Gastrocnemius medialis (tissue), 4 donors: ENCODE measurements at regions of chr11 and their contacts with region 1.

Region 1: DNA sequence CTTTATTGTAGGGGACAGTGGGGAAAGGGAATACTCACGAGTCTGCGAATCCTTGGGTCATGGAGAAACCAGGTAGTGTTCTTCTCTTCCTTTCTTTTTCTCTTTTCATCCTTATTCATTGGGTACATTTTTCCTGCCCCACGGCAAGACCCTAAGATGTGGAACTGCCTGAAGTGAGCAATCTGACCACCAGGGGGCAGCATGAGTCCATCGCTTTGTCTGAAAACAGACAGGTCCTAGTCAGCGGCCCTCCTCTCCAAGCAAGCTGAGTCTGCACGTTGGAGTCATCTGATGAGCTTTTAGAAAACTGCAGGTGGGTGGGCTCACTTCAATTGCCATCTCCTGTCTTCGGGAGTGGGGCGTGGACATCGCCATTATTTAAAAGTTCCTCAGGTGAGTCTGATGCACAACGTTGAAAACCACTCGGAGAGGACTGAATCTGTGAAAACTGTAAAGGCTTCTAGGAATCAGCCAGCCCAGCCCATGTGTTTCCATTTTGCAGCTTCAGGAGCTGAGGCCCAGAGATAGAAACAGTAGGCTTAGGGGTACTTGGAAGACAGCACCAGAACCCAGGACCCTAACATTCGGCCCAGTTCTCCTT is 34.0 kb upstream of the FBXO3 start:
- DNase-seq: peak; percentile 53 to 68
- ATAC-seq: peak; percentile 92 to 93
- H3K4me3 ChIP-seq: no peak overlapping the region
- H3K27ac ChIP-seq: no peak overlapping the region
- H3K4me1 ChIP-seq: no peaks in the 10 kb centered on the region
- H3K27me3 ChIP-seq: peaks cover 0 to under 1% (median 0%) of the 10 kb centered on the region in 3 donors
- CTCF ChIP-seq: peak; percentile 70 to 92 (median 87)
- POLR2A ChIP-seq: no peak

Region 2: GRCh38 chr11:33445761-33446161 is 362.6 kb before region 1 on chr11:
- in situ Hi-C with region 1: no loop called
- intact Hi-C with region 1: no loop called
- DNase-seq: no peak
- ATAC-seq: no peak
- H3K4me3 ChIP-seq: no peak overlapping the region
- H3K27ac ChIP-seq: no peak overlapping the region
- H3K4me1 ChIP-seq: no peaks in the 10 kb centered on the region
- H3K27me3 ChIP-seq: no peaks in the 10 kb centered on the region
- CTCF ChIP-seq: no peak
- POLR2A ChIP-seq: no peak

Region 3: DNA sequence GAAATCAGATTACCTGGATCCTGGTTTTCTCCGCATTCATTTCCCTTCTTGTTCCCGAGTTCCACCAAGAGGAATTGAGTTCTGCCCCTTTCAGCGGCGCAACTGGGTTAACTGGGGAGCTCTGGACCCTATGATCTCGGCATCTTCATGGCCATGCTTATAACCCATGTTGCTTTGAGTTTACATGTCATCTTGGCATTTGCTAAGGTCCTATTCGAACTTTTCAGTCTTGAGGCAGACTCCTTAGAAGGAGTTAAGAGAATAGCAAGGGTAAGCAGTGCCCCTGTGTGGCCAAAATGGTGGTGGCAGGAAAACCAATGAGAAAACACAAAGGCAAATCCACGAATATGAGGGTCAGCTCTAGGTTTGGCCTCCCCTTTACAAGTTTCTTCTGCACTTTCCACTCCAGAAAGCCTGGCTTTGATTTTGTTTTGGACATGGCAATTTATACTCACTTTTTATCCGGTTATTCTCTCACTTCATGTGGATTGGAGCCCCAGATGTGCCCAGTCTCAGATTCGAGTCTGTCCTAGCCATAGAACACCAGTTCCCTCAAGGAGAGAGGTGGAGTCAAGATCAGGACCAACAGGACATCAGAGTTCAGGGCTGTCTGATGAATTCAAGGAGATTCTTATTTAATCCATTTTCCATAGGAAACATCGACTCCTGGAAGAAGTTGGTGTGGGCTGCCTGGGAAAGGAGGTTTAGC is 21.3 kb after region 1 on chr11:
- in situ Hi-C with region 1: no loop called
- intact Hi-C with region 1: loop called (anchors 1 kb)
- DNase-seq: peak in 1 of 2 donors; percentile 44
- ATAC-seq: peak; percentile 91 to 96
- H3K4me3 ChIP-seq: peak overlapping the region; percentile 48 to 69 (median 54)
- H3K27ac ChIP-seq: no peak overlapping the region
- H3K4me1 ChIP-seq: peaks cover 6 to 9% of the 10 kb centered on the region in 2 donors
- H3K27me3 ChIP-seq: peaks cover 12 to 18% (median 15%) of the 10 kb centered on the region in 3 donors
- CTCF ChIP-seq: peak; percentile 55 to 80 (median 73)
- POLR2A ChIP-seq: no peak

Region 4: DNA sequence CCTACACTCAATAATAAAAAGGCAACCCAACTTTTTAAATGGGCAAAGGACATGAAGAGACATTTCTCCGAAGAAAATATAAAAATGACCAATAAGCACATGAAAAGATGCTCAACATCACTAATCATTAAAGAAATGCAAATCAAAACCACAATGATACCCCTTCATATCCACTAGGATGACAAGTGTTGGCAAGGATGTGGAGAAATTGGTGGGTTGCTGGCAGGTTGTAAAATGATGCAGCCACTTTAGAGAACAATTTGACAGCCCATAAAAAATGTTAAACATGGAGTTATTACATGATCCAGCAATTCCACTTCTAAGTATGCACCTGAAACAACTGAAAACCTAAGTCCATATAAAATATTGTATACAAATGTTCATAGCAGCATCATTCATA is 156.7 kb after region 1 on chr11:
- in situ Hi-C with region 1: no loop called
- intact Hi-C with region 1: no loop called
- DNase-seq: no peak
- ATAC-seq: no peak
- H3K4me3 ChIP-seq: no peak overlapping the region
- H3K27ac ChIP-seq: no peak overlapping the region
- H3K4me1 ChIP-seq: no peaks in the 10 kb centered on the region
- H3K27me3 ChIP-seq: no peaks in the 10 kb centered on the region
- CTCF ChIP-seq: no peak
- POLR2A ChIP-seq: no peak

Region 5: GRCh38 chr11:34028425-34028824 is 220.1 kb after region 1 on chr11:
- in situ Hi-C with region 1: no loop called
- intact Hi-C with region 1: no loop called
- DNase-seq: peak; percentile 29 to 38
- ATAC-seq: peak; percentile 76 to 88
- H3K4me3 ChIP-seq: no peak overlapping the region
- H3K27ac ChIP-seq: peak overlapping the region in 2 of 4 donors; percentile 14 to 35
- H3K4me1 ChIP-seq: peaks cover 10 to 13% of the 10 kb centered on the region in 2 donors
- H3K27me3 ChIP-seq: no peaks in the 10 kb centered on the region
- CTCF ChIP-seq: no peak
- POLR2A ChIP-seq: no peak

Region 6: GRCh38 chr11:34318111-34319037 is 510.0 kb after region 1 on chr11:
- in situ Hi-C with region 1: no loop called
- intact Hi-C with region 1: no loop called
- DNase-seq: no peak
- ATAC-seq: peak; percentile 55 to 60
- H3K4me3 ChIP-seq: no peak overlapping the region
- H3K27ac ChIP-seq: no peak overlapping the region
- H3K4me1 ChIP-seq: peaks cover 38 to 45% of the 10 kb centered on the region in 2 donors
- H3K27me3 ChIP-seq: no peaks in the 10 kb centered on the region
- CTCF ChIP-seq: no peak
- POLR2A ChIP-seq: no peak